Activated naive CD4-positive, alpha-beta T cell treated with anti-CD3 and anti-CD28 coated beads for 36 hours (primary cell): ENCODE measurements at regions of chr17 and their contacts with region 1.

Region 1: GRCh38 chr17:18183334-18184142 is at the start of gene ALKBH5:
- DNase-seq: peak; percentile 98
- H3K4me3 Mint-ChIP-seq: peak within 1 kb of the TSS; percentile 96
- H3K27ac Mint-ChIP-seq: peak within 1 kb of the TSS; percentile 96
- H3K4me1 Mint-ChIP-seq: peaks cover 52% of the 10 kb centered on the region
- H3K27me3 Mint-ChIP-seq: no peaks in the 10 kb centered on the region
- total RNA-seq, gene ALKBH5: 83.4 to 86.7 TPM

Region 2: DNA sequence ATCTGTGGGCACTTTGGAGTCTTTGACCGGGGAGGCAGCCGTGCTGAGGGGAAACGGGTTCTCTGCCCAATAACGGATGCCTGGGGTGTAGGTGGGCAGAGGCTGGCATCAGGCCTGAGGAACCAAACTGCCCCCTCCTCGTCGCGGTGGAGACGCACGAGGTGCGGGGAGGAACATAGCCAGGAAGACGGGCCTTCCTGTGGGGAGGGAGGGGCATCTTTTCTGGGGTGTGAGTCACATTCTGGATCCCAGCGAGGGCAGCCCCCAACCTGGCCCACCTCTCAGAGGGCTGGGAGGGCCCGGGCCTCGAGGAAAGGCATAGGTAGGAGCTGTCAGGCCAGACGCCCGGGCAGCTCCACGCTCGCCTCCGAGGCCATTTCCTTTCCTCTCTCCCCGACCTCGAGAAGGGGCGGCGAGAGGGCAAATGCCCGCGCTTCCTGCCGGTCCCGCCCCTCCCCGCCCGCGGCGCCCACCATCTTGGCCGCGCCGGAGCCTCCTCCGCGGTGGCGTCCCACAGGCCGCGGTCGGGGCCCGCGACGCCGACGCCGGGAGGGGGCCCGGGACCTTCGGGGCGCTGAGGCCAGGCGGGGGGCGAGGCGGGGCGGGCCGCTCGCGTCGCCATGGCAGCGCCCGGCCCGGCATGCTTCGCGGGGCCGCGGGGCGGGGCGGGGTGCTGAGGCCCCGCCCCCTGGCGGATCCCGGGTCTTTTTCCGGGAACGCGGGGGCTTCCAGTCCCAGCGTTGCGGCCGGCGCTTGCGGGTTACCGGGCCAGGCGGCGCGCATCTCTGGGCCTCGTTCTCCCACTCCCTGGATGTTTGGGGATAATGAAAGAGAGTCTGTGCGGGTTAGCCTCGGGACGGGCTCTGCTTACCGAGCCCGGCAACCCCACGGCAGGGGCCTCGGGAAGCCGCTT is 489.1 kb before region 1 on chr17:
- CTCF ChIA-PET with region 1: no interaction called
- intact Hi-C with region 1: loop called (anchors 5 kb)
- DNase-seq: peak; percentile 80
- H3K4me3 Mint-ChIP-seq: peak overlapping the region; percentile 90
- H3K27ac Mint-ChIP-seq: peak overlapping the region; percentile 97
- H3K4me1 Mint-ChIP-seq: peaks cover 71% of the 10 kb centered on the region
- H3K27me3 Mint-ChIP-seq: no peaks in the 10 kb centered on the region

Region 3: DNA sequence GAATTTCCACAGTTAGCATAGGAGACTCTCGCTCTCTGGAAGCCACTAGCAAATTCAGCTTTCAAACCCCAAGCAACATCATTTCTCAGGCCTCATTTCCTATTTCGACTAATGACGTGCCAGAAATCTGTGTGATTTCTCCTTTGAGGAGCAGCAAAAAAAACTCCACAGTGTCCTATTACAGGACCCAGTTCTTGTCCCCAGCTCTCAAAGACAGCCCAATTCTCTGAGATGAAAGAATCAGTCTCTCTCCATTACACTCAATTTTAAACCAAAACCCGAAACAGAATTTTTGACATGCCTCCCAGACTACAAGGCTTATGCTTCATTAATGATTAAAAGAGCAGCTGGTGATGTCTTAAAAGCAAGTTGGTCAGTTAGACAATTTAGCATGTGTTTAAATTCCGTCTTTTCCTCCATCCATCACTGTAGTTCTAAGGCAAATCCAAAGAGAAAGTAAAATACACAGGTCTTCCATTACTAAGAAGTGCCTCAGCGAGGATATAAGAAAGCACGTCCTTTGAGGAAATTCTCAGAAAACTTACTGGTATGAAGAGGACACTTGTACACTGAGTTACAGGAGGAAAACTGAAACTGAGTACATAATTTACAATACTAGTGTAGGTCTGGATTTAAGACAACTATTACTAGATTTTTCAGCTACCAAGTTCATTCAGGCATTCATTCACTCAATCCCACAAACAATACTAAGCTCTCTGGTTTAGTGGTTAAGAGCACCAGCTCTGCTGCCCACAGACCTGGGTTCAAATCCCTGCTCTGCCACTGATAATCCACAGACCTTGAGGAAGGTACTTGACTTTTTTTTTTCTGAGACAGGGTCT is 223.8 kb before region 1 on chr17:
- CTCF ChIA-PET with region 1: interaction called, 3 read pairs
- intact Hi-C with region 1: loop called (anchors 1 kb)
- DNase-seq: peak; percentile 60
- H3K4me3 Mint-ChIP-seq: peak overlapping the region; percentile 74
- H3K27ac Mint-ChIP-seq: peak overlapping the region; percentile 96
- H3K4me1 Mint-ChIP-seq: peaks cover 72% of the 10 kb centered on the region
- H3K27me3 Mint-ChIP-seq: no peaks in the 10 kb centered on the region

Region 4: DNA sequence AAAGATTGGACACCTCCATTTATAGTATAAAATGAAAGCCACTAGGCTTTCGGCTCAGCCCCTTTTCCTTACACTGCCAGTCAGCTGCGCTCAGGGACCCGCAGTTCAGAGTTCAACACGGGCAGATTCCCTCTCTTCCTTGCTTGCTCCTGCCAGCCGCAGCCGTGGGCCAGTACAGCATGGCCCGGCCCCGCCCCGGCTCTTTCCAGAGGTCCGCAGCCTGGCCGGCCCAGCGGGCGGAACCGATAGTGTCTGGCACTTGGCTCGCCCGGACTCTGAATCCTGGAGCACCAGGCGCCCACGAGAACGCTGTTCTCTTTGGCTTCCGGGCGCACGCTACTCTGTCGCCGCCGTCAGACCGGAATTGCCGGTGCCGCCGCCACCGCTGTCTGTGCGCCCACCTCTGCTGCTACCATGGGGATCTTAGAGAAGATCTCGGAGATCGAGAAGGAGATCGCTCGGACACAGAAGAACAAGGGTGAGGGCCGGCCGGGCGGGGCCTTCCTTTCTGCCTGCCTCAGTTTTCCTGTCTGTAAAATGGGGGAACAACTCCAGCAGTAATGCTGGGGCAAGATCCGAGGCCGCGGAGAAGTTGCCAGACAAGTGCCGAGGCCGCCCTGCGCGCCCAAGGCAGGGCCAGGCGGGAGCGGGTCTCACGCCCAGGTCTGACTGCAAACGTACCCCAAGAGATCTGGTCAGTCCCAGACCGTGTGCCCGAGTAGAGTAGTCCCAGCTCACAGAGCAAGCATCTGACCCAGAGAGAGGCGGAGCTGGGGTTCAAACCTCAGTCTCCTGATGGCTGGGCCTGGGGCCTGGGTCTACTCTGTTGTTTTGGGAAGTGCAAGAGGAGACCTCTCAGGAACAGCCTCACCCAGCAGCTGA is 95.7 kb before region 1 on chr17 and contains the start of gene DRG2:
- CTCF ChIA-PET with region 1: interaction called, 3 read pairs
- intact Hi-C with region 1: loop called (anchors 1 kb)
- DNase-seq: peak; percentile 92
- H3K4me3 Mint-ChIP-seq: peak within 1 kb of the TSS; percentile 97
- H3K27ac Mint-ChIP-seq: peak within 1 kb of the TSS; percentile 93
- H3K4me1 Mint-ChIP-seq: peaks cover 29% of the 10 kb centered on the region
- H3K27me3 Mint-ChIP-seq: no peaks in the 10 kb centered on the region
- total RNA-seq, gene DRG2: 38.4 to 38.7 TPM

Region 5: DNA sequence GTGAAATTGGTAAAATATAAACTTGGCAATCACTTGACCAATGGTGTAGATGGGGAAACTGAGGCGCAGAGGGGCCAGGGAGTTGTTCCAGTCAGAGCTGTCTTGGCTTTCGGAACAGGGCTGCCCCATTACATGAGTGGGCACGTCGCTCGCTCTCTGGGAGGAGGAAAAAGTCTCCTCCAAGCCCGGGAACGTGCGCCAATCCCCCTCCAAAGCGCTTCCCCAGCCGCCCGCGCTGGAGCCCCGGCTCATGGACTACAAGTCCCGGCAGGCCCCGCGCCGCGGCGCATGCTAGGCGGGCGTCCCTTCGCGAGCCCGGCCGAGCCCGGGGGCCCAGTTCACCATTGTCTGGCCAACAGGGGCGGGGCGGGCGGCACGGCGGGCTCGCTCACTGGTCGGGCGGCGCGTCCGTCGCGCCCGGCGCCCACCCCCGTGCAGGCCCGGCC is 41.6 kb after region 1 on chr17:
- CTCF ChIA-PET with region 1: no interaction called
- intact Hi-C with region 1: loop called (anchors 1 kb)
- DNase-seq: peak; percentile 97
- H3K4me3 Mint-ChIP-seq: peak overlapping the region; percentile 70
- H3K27ac Mint-ChIP-seq: no peak overlapping the region
- H3K4me1 Mint-ChIP-seq: peaks cover 24% of the 10 kb centered on the region
- H3K27me3 Mint-ChIP-seq: no peaks in the 10 kb centered on the region

Region 6: DNA sequence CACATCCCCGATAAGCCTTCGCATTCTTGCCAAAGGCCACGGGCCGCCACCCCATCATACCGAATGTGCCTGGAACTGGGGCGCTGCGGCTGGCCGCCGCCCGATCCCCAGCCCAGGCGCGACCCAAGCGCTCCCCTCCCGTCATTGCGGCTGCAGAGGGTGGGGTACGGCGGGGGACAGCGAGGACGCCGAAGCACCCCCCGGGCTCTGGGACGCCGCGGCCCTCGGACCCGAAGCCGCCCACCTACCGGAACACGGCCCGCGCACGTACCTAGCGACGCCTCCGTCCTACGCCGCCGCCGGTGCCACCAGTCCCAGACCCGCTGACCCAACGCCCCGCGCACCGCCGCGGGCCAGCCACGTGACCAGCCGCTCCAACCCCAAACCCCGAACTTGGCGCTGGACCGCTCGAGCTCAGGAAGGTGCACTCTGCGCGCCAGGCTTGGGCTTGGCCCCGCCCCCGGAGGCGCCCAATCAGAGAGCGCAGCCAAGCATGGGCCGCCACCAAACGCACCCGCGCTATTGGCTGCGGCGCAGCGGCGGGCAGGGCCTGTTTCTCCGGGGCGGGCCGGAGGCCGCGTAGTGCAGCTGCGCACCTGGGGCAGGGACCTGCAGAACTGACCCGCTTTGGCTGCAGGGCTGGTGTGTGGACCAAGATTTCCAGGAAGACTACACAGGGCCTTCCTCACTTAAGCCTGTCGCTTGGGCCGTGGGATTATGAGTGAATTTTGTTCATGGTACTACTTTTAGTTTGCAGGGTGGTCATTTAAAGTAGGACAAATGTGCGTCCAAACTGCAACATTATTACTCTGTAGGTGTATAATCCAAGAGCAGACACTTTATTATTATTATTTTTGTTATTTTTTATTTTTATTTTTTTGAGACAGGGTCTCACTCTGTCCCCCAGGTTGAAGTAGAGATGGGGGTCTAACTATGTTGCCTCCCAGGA is 179.8 kb after region 1 on chr17 and contains the start of gene SHMT1:
- CTCF ChIA-PET with region 1: no interaction called
- intact Hi-C with region 1: loop called (anchors 5 kb)
- DNase-seq: peak; percentile 94
- H3K4me3 Mint-ChIP-seq: peak within 1 kb of the TSS; percentile 89
- H3K27ac Mint-ChIP-seq: peak within 1 kb of the TSS; percentile 83
- H3K4me1 Mint-ChIP-seq: peaks cover 15% of the 10 kb centered on the region
- H3K27me3 Mint-ChIP-seq: peaks cover 1% of the 10 kb centered on the region
- total RNA-seq, gene SHMT1: 46.7 to 51.0 TPM